ENCODE measurements at regions of chr1 and their contacts with region 1.

Region 1: GRCh38 chr1:214328770-214329469 is 48.0 kb downstream of the SMYD2 start:
- DNase-seq: peak; percentile 81
- ATAC-seq: peak; percentile 85
- H3K4me3 ChIP-seq: no peak overlapping the region
- H3K27ac ChIP-seq: no peak overlapping the region
- H3K4me1 ChIP-seq: peaks cover 5% of the 10 kb centered on the region
- H3K27me3 ChIP-seq: no peaks in the 10 kb centered on the region
- CTCF ChIP-seq: peak; percentile 96
- POLR2A ChIP-seq: peak; percentile 65; the same call in 1 of the 2 replicates
- RAD21 ChIP-seq: peak; percentile 97

Region 2: DNA sequence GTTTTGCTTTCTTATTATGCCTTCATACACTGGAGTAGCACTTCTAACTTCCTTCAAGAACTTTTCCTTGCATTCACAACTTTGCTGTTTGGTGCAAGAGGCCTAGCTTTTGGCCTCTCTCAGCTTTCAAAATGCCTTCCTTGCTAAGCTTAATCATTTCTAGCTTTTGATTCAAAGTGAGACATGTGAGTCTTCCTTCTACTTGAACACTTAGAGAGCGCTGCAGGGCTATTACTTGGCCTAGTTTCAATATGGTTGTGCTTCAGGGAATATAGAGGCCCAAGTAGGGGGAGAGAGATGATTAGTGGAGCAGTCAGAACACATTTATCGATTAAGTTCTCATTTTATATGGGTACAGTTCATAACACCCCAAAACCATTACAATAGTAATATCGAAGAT is 1325.7 kb before region 1 on chr1:
- CTCF ChIA-PET with region 1: no interaction called
- POLR2A ChIA-PET with region 1: no interaction called
- dilution Hi-C with region 1: no loop called
- in situ Hi-C with region 1: no loop called
- intact Hi-C with region 1: no loop called
- DNase-seq: no peak
- ATAC-seq: no peak
- H3K4me3 ChIP-seq: no peak overlapping the region
- H3K27ac ChIP-seq: no peak overlapping the region
- H3K4me1 ChIP-seq: no peaks in the 10 kb centered on the region
- H3K27me3 ChIP-seq: no peaks in the 10 kb centered on the region
- CTCF ChIP-seq: no peak
- POLR2A ChIP-seq: no peak
- RAD21 ChIP-seq: no peak

Region 3: DNA sequence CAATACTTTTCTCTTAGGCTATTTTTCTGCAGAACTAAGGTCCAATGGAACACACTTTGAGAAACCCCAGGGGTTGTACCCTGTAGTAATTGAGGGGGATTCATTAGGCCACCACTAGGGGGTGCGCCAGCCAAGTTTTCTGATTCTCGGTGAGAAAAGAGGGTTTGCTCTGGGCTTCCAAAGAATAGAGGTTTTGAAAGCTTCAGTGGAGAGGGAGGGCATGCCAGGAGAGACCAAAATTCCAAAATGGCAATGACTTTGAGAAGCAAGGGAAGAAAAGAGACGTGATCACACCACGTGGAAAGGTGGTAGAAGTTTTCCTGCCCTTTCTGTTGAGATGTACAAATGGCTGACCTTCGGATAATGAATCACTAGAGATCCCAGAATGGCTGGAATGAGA is 954.6 kb before region 1 on chr1:
- CTCF ChIA-PET with region 1: no interaction called
- POLR2A ChIA-PET with region 1: no interaction called
- dilution Hi-C with region 1: no loop called
- in situ Hi-C with region 1: no loop called
- intact Hi-C with region 1: loop called (anchors 2 kb)
- DNase-seq: peak; percentile 32
- ATAC-seq: peak; percentile 92
- H3K4me3 ChIP-seq: no peak overlapping the region
- H3K27ac ChIP-seq: no peak overlapping the region
- H3K4me1 ChIP-seq: no peaks in the 10 kb centered on the region
- H3K27me3 ChIP-seq: no peaks in the 10 kb centered on the region
- CTCF ChIP-seq: peak; percentile 78
- POLR2A ChIP-seq: no peak
- RAD21 ChIP-seq: peak; percentile 58

Region 4: DNA sequence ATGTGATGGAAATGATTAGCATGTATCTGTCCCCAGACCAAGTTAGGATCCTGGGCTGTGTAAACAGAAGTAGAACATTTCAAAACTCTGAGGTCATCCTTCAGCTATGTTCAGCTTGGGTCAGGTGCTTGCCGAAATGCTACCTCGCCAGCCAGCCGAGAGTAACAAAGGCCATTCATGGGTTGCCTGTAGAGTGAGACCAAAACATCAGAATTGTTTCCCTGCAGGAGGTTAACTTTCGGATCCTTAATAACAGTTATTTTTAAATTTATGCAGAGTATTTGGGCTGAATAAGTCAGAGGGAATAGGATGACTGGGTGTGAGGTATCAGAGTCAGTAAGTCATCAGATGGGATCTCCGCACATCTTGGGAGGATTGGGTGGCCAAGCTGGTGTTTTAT is 12.3 kb before region 1 on chr1:
- CTCF ChIA-PET with region 1: interaction called, 16 read pairs
- POLR2A ChIA-PET with region 1: no interaction called
- dilution Hi-C with region 1: no loop called
- in situ Hi-C with region 1: no loop called
- intact Hi-C with region 1: no loop called
- DNase-seq: peak; percentile 41
- ATAC-seq: peak; percentile 42; the same call in 1 of the 2 replicates
- H3K4me3 ChIP-seq: no peak overlapping the region
- H3K27ac ChIP-seq: no peak overlapping the region
- H3K4me1 ChIP-seq: peaks cover 2% of the 10 kb centered on the region; the same call in 1 of the 2 replicates
- H3K27me3 ChIP-seq: no peaks in the 10 kb centered on the region
- CTCF ChIP-seq: no peak
- POLR2A ChIP-seq: no peak
- RAD21 ChIP-seq: no peak

Region 5: DNA sequence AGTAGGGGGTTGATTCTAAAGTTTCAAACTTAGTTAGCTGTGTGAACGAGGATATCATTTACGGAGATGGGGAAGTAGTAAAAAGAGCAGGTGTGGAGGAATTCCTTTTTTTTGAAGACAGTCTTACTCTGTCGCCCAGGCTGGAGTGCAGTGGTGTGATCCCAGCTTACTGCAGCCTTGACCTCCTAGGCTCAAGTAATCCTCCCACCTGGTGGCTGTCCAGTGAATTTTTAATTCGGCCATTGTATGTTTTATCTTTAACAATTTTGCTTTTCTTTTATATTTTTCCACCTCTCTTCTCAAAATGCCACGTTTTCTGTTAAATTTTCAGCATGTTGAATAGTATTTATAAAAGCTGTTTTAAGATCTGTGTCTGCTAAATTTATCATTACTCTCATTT is 261.8 kb after region 1 on chr1:
- CTCF ChIA-PET with region 1: interaction called, 59 read pairs
- POLR2A ChIA-PET with region 1: no interaction called
- dilution Hi-C with region 1: no loop called
- in situ Hi-C with region 1: loop called (anchors 5 kb)
- intact Hi-C with region 1: loop called (anchors 1 kb)
- DNase-seq: no peak
- ATAC-seq: no peak
- H3K4me3 ChIP-seq: no peak overlapping the region
- H3K27ac ChIP-seq: no peak overlapping the region
- H3K4me1 ChIP-seq: no peaks in the 10 kb centered on the region
- H3K27me3 ChIP-seq: peaks cover 1% of the 10 kb centered on the region
- CTCF ChIP-seq: no peak
- POLR2A ChIP-seq: no peak
- RAD21 ChIP-seq: no peak

Region 6: DNA sequence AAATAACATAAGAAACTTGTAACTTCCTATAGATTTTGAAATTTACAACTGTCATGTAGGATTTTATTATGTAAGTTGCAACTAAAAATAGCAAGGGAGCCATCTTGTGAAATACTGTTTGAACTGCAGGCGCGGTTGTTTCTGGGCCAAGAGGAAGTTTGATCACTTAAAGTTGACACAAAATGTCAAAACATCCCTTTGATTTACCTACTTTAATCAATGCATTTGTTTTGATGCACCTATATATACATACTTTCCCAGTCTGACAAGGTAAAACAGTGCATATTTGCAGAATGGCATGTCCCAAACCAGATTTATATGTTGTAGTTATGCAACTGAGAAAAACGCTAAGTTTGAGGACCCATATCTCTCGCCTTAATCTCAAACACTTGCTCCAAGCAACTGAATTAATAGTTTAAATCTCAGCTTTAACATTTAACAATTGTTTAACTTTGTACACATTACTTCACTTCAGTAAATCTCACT is 817.5 kb after region 1 on chr1:
- CTCF ChIA-PET with region 1: no interaction called
- POLR2A ChIA-PET with region 1: no interaction called
- dilution Hi-C with region 1: no loop called
- in situ Hi-C with region 1: no loop called
- intact Hi-C with region 1: loop called (anchors 10 kb)
- DNase-seq: peak; percentile 64
- ATAC-seq: no peak
- H3K4me3 ChIP-seq: no peak overlapping the region
- H3K27ac ChIP-seq: no peak overlapping the region
- H3K4me1 ChIP-seq: no peaks in the 10 kb centered on the region
- H3K27me3 ChIP-seq: no peaks in the 10 kb centered on the region
- CTCF ChIP-seq: peak; percentile 74
- POLR2A ChIP-seq: no peak
- RAD21 ChIP-seq: peak; percentile 76